ENCODE measurements at regions of chr4 and their contacts with region 1.

Region 1: GRCh38 chr4:158268553-158268952 is 58.3 kb downstream of the TMEM144 start:
- DNase-seq: no peak
- ATAC-seq: no peak
- H3K4me3 ChIP-seq: no peak overlapping the region
- H3K27ac ChIP-seq: no peak overlapping the region
- H3K4me1 ChIP-seq: no peaks in the 10 kb centered on the region
- H3K27me3 ChIP-seq: no peaks in the 10 kb centered on the region
- CTCF ChIP-seq: no peak
- EP300 ChIP-seq: no peak
- POLR2A ChIP-seq: no peak
- RAD21 ChIP-seq: no peak

Region 2: DNA sequence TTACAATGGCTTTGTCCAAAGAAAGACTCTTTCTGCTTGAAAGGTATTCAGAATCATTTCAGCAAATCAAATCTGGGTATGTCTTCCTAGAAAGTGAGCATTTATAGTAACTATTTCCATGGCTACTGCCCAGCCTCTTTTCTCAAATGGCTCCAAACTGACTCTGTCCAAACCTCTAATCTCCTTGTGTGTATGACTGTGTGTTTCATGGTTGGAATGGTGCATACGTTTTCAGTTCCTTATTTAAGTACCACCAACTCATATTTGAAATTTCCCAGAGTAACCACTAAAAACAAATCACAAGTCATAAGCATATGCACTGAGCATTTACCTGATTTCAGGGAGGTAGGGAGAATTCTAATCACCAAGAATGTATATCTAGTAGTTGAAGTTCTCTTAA is 47.7 kb after region 1 on chr4:
- CTCF ChIA-PET with region 1: no interaction called
- POLR2A ChIA-PET with region 1: no interaction called
- in situ Hi-C with region 1: no loop called
- intact Hi-C with region 1: loop called (anchors 2 kb)
- DNase-seq: no peak
- ATAC-seq: no peak
- H3K4me3 ChIP-seq: no peak overlapping the region
- H3K27ac ChIP-seq: no peak overlapping the region
- H3K4me1 ChIP-seq: no peaks in the 10 kb centered on the region
- H3K27me3 ChIP-seq: no peaks in the 10 kb centered on the region
- CTCF ChIP-seq: no peak
- EP300 ChIP-seq: no peak
- POLR2A ChIP-seq: no peak
- RAD21 ChIP-seq: no peak

Measured in HepG2 (cell line).